PC-9 (cell line): ENCODE measurements at regions of chr5 and their contacts with region 1.

Region 1: GRCh38 chr5:776792-777711 is 7.5 kb downstream of the ZDHHC11B start:
- DNase-seq: no peak
- H3K4me3 ChIP-seq: no peak overlapping the region
- H3K27ac ChIP-seq: no peak overlapping the region
- H3K4me1 ChIP-seq: no peaks in the 10 kb centered on the region
- H3K27me3 ChIP-seq: peaks cover 64% of the 10 kb centered on the region
- CTCF ChIP-seq: no peak

Region 2: DNA sequence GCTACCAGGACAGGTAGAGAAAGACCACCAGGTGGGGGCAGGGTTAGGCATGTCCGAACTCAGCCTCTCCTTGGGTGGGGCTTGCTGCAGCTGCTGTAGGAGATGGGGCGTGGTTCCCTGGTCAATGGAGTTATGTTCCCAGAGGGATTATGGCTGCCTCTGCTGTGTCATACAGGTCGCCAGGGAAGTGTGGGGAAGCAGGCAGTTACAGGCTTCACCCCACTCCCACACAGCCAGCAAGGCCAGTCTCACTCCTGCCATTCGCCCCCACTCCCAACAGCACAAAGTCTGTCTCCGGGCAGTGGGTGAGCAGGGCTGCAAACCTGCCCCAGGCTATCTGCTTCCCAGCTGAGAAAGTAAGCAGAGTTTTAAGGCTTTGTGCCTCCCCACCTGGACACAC is 184.9 kb before region 1 on chr5:
- CTCF ChIA-PET with region 1: no interaction called
- POLR2A ChIA-PET with region 1: no interaction called
- intact Hi-C with region 1: no loop called
- DNase-seq: no peak
- H3K4me3 ChIP-seq: no peak overlapping the region
- H3K27ac ChIP-seq: no peak overlapping the region
- H3K4me1 ChIP-seq: no peaks in the 10 kb centered on the region
- H3K27me3 ChIP-seq: peaks cover 100% of the 10 kb centered on the region
- CTCF ChIP-seq: no peak

Region 3: DNA sequence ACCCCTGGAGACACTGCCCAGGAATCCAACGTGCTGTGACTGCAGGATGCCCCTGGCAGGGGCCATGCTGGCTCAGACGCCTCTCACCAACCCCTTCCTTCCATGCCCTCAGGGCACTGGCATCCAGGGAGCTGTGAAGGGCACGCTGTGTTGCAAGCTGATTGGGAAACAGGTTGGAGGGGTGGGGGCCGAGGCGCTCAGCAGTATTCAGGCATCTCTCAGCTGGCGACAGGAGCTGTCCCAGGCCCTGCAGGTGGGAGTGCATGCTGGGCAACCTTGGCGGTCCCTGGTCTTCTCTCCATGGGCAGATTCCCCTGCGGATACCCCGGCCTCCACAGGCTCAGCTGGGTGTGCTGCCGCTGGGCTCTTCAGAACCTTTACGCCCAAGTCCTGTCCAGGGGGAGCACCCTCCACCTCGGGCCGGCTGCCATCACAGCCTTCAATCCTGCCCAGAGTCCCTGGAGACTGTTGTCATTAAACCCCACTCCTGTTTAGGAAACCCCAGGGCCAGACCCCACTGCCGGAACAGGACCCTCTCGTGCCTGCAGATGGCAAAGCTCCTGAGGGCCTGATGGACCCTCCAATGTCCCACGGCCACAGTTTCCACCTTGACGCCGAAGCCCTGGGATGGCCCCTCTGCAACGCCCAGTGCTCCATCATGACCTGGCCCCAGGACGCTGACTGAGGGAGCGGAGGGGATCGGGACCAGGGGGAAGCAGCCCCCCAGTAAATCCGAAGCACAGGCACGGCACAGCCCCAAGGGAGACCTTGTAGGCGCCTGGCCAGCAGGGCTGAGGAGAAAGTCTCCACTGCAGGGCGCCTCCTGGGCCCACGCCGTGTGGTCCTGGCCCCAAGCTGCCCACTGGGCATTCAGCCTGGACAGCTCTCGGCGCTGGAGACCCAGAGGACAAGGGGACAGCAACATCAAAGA is 93.2 kb before region 1 on chr5:
- CTCF ChIA-PET with region 1: no interaction called
- POLR2A ChIA-PET with region 1: no interaction called
- intact Hi-C with region 1: loop called (anchors 2 kb)
- DNase-seq: peak; percentile 60 to 73
- H3K4me3 ChIP-seq: no peak overlapping the region
- H3K27ac ChIP-seq: no peak overlapping the region
- H3K4me1 ChIP-seq: no peaks in the 10 kb centered on the region
- H3K27me3 ChIP-seq: peaks cover 26% of the 10 kb centered on the region
- CTCF ChIP-seq: no peak

Region 4: GRCh38 chr5:885529-885928 is 108.5 kb after region 1 on chr5:
- CTCF ChIA-PET with region 1: no interaction called
- POLR2A ChIA-PET with region 1: no interaction called
- intact Hi-C with region 1: no loop called
- DNase-seq: no peak
- H3K4me3 ChIP-seq: no peak overlapping the region
- H3K27ac ChIP-seq: no peak overlapping the region
- H3K4me1 ChIP-seq: no peaks in the 10 kb centered on the region
- H3K27me3 ChIP-seq: no peaks in the 10 kb centered on the region
- CTCF ChIP-seq: no peak

Region 5: DNA sequence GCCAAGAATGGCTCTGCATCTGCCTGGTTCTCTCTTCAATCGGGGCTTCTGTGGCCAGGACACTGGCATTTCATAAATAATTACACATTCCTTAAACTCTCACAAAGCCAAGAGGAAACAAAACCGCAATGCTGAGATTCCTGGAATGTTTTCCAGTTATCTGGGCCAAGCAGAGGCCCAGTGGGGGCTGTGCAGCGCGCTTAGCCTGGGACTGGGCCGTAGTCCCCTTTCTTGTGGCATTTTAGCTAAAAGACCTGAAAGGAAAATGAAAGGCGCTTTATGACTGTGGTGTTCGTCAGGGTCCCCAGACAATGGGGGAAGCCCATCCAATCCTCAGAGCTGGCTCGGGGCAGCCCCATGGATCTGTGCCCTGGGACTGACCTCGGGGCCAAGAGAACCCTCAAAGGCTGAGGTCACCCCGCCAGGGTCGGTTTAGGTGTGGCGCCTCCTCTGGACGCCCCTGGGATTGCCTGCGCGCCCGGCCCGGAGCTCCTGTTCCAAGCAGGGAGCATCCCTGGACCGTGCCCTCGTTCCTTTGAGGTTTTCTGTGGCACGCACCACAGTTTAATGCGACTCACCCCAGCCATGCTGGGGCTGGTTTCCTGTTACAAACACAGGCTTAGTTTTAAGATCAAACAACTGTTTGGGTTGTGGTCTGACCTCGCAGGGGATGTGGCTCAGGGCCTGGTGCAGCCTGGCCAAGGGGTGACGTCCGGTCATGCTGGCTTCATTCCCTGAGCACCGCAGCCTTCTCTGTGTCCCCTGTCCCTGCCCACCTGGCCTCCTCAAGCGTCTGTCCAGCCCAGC is 180.1 kb after region 1 on chr5:
- CTCF ChIA-PET with region 1: no interaction called
- POLR2A ChIA-PET with region 1: no interaction called
- intact Hi-C with region 1: no loop called
- DNase-seq: peak; percentile 51 to 63
- H3K4me3 ChIP-seq: no peak overlapping the region
- H3K27ac ChIP-seq: no peak overlapping the region
- H3K4me1 ChIP-seq: no peaks in the 10 kb centered on the region
- H3K27me3 ChIP-seq: peaks cover 96% of the 10 kb centered on the region
- CTCF ChIP-seq: peak; percentile 43; the same call in 1 of the 2 replicates